CD8-positive, alpha-beta T cell (primary cell): ENCODE measurements at regions of chr7 and their contacts with region 1.

Region 1: DNA sequence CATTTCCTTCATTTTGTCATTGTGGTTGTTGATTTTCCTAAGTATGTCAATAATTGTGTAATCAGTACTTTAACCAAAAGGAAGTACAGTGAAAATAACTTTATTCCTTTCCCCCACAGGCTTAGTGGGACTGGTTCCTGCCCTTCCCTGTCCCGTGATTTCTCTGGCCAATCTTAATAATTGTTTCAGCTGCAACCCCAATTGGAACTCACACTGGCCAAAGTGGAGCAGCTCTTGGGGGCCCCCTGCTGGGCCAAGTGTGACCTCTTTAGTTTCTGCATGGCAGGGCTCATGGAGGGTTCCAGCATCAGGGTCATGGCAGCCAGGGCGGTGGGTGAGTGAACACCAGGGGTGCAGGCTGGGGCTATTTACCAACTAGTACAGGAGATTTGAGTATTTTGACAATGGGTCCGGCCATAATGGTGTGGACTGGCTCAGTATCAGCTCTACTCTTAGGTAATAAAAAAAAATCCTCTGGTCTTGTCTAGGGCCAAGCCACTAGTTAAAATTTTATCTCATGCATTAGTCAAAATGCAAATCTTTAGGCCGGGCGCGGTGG is 31.7 kb downstream of the CYCS start:
- DNase-seq: peak; percentile 51 to 82 (median 75)
- ATAC-seq: peak; percentile 88
- H3K4me3 ChIP-seq: no peak overlapping the region
- H3K4me3 Mint-ChIP-seq: no peak overlapping the region
- H3K27ac ChIP-seq: no peak overlapping the region
- H3K27ac Mint-ChIP-seq: no peak overlapping the region
- H3K4me1 ChIP-seq: peaks cover 3% of the 10 kb centered on the region
- H3K4me1 Mint-ChIP-seq: peaks cover 6% of the 10 kb centered on the region
- H3K27me3 ChIP-seq: no peaks in the 10 kb centered on the region
- H3K27me3 Mint-ChIP-seq: peaks cover 2% of the 10 kb centered on the region
- CTCF ChIP-seq: peak; percentile 77

Region 2: GRCh38 chr7:23570592-23571200 is 1522.7 kb before region 1 on chr7:
- CTCF ChIA-PET with region 1: interaction called, 3 read pairs
- POLR2A ChIA-PET with region 1: no interaction called
- intact Hi-C with region 1: loop called (anchors 2 kb)
- DNase-seq: peak; percentile 40 to 81 (median 66)
- ATAC-seq: peak; percentile 83
- H3K4me3 ChIP-seq: no peak overlapping the region
- H3K4me3 Mint-ChIP-seq: no peak overlapping the region
- H3K27ac ChIP-seq: no peak overlapping the region
- H3K27ac Mint-ChIP-seq: no peak overlapping the region
- H3K4me1 ChIP-seq: no peaks in the 10 kb centered on the region
- H3K4me1 Mint-ChIP-seq: no peaks in the 10 kb centered on the region
- H3K27me3 ChIP-seq: no peaks in the 10 kb centered on the region
- H3K27me3 Mint-ChIP-seq: peaks cover 16% of the 10 kb centered on the region
- CTCF ChIP-seq: peak; percentile 67

Region 3: DNA sequence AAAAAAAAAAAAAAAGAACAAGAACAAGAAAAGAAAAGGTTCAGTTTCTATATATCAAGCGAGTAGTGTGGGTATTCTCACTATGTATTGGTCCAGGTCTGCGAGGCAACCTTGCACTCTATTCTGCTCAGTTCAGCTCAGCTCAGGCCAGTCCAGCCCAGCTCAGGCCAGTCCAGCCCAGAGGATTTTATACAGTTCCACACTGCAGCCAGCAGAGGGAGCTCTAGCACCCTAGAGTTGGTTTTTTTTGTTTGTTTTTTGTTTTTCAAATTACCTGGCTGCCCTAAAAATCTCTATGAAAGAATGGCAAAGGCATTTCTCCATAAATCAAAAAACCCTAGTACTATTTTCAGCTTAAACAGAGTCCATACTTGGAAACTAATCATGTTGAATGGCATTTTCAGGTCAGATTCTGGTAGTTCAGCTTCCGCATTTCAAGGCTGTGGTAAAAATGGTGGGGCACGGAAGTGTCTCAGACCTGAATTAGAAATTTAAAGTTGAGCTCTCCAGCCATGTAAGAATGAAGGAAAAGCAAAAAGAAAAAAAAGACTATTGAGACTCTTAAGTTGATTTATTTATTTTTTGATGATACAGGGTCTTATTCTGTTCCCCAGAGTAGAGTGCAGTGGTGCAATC is 280.9 kb before region 1 on chr7:
- CTCF ChIA-PET with region 1: interaction called, 170 read pairs
- POLR2A ChIA-PET with region 1: no interaction called
- intact Hi-C with region 1: loop called (anchors 1 kb)
- DNase-seq: peak in 7 of 9 experiments; percentile 33 to 67 (median 52)
- ATAC-seq: peak; percentile 66
- H3K4me3 ChIP-seq: no peak overlapping the region
- H3K4me3 Mint-ChIP-seq: no peak overlapping the region
- H3K27ac ChIP-seq: no peak overlapping the region
- H3K27ac Mint-ChIP-seq: no peak overlapping the region
- H3K4me1 ChIP-seq: no peaks in the 10 kb centered on the region
- H3K4me1 Mint-ChIP-seq: no peaks in the 10 kb centered on the region
- H3K27me3 ChIP-seq: no peaks in the 10 kb centered on the region
- H3K27me3 Mint-ChIP-seq: no peaks in the 10 kb centered on the region
- CTCF ChIP-seq: peak; percentile 90

Region 4: GRCh38 chr7:24825931-24826661 is 267.3 kb before region 1 on chr7:
- CTCF ChIA-PET with region 1: interaction called, 50 read pairs
- POLR2A ChIA-PET with region 1: interaction called, 6 read pairs
- intact Hi-C with region 1: no loop called
- DNase-seq: peak in 4 of 9 experiments; percentile 8 to 36 (median 18)
- ATAC-seq: peak; percentile 1
- H3K4me3 ChIP-seq: peak overlapping the region in 1 of 2 experiments; percentile 3
- H3K4me3 Mint-ChIP-seq: peak overlapping the region; percentile 9
- H3K27ac ChIP-seq: peak overlapping the region in 1 of 2 experiments; percentile 27
- H3K27ac Mint-ChIP-seq: peak overlapping the region; percentile 94
- H3K4me1 ChIP-seq: peaks cover 39% of the 10 kb centered on the region
- H3K4me1 Mint-ChIP-seq: peaks cover 46% of the 10 kb centered on the region
- H3K27me3 ChIP-seq: no peaks in the 10 kb centered on the region
- H3K27me3 Mint-ChIP-seq: no peaks in the 10 kb centered on the region
- CTCF ChIP-seq: no peak

Region 5: DNA sequence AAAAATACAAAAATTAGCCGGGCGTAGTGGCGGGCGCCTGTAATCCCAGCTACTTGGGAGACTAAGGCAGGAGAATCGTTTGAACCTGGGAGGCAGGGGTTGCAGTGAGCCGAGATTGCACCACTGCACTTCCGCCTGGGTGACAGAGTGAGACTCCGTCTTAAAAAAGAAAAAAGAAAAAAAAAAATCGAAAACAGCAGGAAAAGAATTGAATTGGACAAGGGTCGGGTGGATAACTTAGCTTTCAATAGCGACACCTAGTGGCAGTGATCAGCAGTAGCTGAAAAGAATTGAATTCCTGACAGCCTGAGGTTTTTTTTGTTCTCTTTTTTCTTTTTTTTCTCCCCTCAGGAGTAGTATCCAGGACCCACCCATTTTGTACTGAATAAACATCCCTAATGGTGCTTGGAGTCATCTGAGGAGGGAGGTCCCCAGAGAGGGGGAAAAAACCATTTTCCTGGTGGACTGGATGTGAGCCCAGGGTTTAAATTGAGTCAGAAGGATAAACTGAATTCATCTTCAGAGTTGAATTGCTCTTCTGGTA is 23.4 kb before region 1 on chr7:
- CTCF ChIA-PET with region 1: interaction called, 71 read pairs
- POLR2A ChIA-PET with region 1: no interaction called
- intact Hi-C with region 1: loop called in 1 of 2 experiments (anchors 2 kb)
- DNase-seq: peak in 8 of 9 experiments; percentile 7 to 80 (median 47)
- ATAC-seq: peak; percentile 57
- H3K4me3 ChIP-seq: no peak overlapping the region
- H3K4me3 Mint-ChIP-seq: no peak overlapping the region
- H3K27ac ChIP-seq: no peak overlapping the region
- H3K27ac Mint-ChIP-seq: no peak overlapping the region
- H3K4me1 ChIP-seq: no peaks in the 10 kb centered on the region
- H3K4me1 Mint-ChIP-seq: no peaks in the 10 kb centered on the region
- H3K27me3 ChIP-seq: no peaks in the 10 kb centered on the region
- H3K27me3 Mint-ChIP-seq: no peaks in the 10 kb centered on the region
- CTCF ChIP-seq: peak; percentile 88

Region 6: DNA sequence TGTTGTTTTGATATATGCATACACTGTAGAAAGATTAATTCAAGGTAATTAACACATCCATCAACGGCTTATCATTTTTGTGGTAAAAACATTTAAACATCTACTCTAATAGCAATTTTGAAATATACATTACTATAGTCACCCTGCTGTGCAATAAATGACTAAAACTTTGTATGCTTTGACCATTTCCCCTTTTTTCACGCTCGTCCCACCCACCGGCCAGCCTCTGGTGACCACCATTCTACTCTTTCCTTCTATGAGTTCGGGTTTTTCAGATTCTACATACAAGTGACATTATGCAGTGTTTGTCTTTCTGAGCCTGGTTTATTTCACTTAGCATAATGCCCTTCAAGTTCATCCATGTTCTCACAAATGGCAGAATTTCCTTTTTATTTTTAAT is 10.4 kb after region 1 on chr7:
- CTCF ChIA-PET with region 1: interaction called, 23 read pairs
- POLR2A ChIA-PET with region 1: no interaction called
- intact Hi-C with region 1: no loop called
- DNase-seq: no peak
- ATAC-seq: no peak
- H3K4me3 ChIP-seq: no peak overlapping the region
- H3K4me3 Mint-ChIP-seq: no peak overlapping the region
- H3K27ac ChIP-seq: no peak overlapping the region
- H3K27ac Mint-ChIP-seq: no peak overlapping the region
- H3K4me1 ChIP-seq: no peaks in the 10 kb centered on the region
- H3K4me1 Mint-ChIP-seq: no peaks in the 10 kb centered on the region
- H3K27me3 ChIP-seq: no peaks in the 10 kb centered on the region
- H3K27me3 Mint-ChIP-seq: peaks cover 4% of the 10 kb centered on the region
- CTCF ChIP-seq: no peak

Region 7: GRCh38 chr7:26346611-26347203 is 1253.4 kb after region 1 on chr7:
- CTCF ChIA-PET with region 1: no interaction called
- POLR2A ChIA-PET with region 1: no interaction called
- intact Hi-C with region 1: no loop called
- DNase-seq: no peak
- ATAC-seq: no peak
- H3K4me3 ChIP-seq: no peak overlapping the region
- H3K4me3 Mint-ChIP-seq: no peak overlapping the region
- H3K27ac ChIP-seq: no peak overlapping the region
- H3K27ac Mint-ChIP-seq: no peak overlapping the region
- H3K4me1 ChIP-seq: no peaks in the 10 kb centered on the region
- H3K4me1 Mint-ChIP-seq: no peaks in the 10 kb centered on the region
- H3K27me3 ChIP-seq: no peaks in the 10 kb centered on the region
- H3K27me3 Mint-ChIP-seq: no peaks in the 10 kb centered on the region
- CTCF ChIP-seq: no peak